ENCODE measurements at regions of chr10 and their contacts with region 1.

Region 1: DNA sequence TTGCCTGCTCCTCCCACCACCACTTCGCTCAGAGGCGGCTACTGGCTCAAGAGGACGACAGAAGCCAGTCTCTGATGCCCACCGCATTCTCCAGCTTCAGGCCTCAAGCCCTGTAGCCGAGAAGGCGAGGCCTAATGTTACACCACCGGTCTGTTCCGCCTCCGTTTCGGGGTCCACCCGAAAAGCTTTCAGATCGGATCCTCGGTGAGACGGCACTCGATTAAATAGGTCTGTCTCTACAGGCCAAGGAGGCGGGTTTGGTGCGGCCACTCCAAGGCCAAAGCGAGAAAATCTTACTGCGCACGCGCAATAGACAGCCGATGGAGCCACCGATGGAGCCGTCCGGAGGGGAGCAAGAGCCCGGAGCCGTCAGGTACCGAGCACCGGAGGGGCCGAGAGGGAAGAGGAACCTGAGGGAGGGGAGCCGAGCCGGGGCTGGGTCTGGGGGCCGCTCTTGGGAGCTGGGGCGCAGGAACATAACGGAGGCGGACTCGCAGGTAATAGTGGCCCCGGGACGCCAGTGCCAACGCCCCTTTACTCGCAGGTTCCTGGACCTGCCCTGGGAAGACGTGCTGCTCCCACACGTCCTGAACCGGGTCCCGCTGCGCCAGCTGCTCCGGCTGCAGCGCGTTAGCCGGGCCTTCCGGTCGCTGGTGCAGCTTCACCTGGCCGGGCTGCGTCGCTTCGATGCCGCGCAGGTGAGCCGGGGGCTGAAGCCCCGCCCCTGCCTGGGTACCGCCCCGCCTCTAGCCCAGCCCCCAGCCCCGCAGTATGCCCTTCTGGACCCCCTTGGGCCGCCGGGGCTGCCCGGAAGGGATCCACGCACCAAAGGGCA is at the start of gene FBXL15:
- DNase-seq: peak; percentile 90 to 98
- H3K4me3 ChIP-seq: peak within 1 kb of the TSS; percentile 74 to 92 (median 80)
- H3K27ac ChIP-seq: peak within 1 kb of the TSS; percentile 81; the same call in 1 of the 2 replicates
- H3K4me1 ChIP-seq: peaks cover 0 to 24% (median 10%) of the 10 kb centered on the region in 4 experiments; a peak in 5 of 7 replicates
- H3K27me3 ChIP-seq: no peaks in the 10 kb centered on the region
- CTCF ChIP-seq: no peak; a peak in 1 of 4 replicates
- EP300 ChIP-seq: peak in 1 of 2 experiments; percentile 50; a peak in 1 of 3 replicates
- POLR2A ChIP-seq: peak in 1 of 2 experiments; percentile 57; a peak in 1 of 3 replicates
- RAD21 ChIP-seq: no peak
- total RNA-seq, gene FBXL15: 11.3 and 15.4 TPM in 2 replicates

Region 2: GRCh38 chr10:102159051-102159597 is 261.9 kb before region 1 on chr10:
- CTCF ChIA-PET with region 1: no interaction called
- POLR2A ChIA-PET with region 1: no interaction called
- DNase-seq: no peak
- H3K4me3 ChIP-seq: no peak overlapping the region
- H3K27ac ChIP-seq: no peak overlapping the region
- H3K4me1 ChIP-seq: peaks cover 0 to 4% (median 0%) of the 10 kb centered on the region in 4 experiments; a peak in 1 of 7 replicates
- H3K27me3 ChIP-seq: no peaks in the 10 kb centered on the region
- CTCF ChIP-seq: no peak
- EP300 ChIP-seq: no peak
- POLR2A ChIP-seq: no peak
- RAD21 ChIP-seq: no peak

Region 3: GRCh38 chr10:102384053-102384452 is 37.0 kb before region 1 on chr10:
- CTCF ChIA-PET with region 1: interaction called, 65 read pairs
- POLR2A ChIA-PET with region 1: interaction called, 3 read pairs
- DNase-seq: peak in 1 of 2 experiments; percentile 63
- H3K4me3 ChIP-seq: no peak overlapping the region
- H3K27ac ChIP-seq: no peak overlapping the region
- H3K4me1 ChIP-seq: 0 out of 7 replicates have a peak, but pooled peaks cover 0 to 2% (median 0%) of the 10 kb centered on the region in 4 experiments
- H3K27me3 ChIP-seq: no peaks in the 10 kb centered on the region
- CTCF ChIP-seq: peak; percentile 83 to 87 (median 84)
- EP300 ChIP-seq: no peak
- POLR2A ChIP-seq: no peak
- RAD21 ChIP-seq: peak; percentile 66 to 72

Region 4: DNA sequence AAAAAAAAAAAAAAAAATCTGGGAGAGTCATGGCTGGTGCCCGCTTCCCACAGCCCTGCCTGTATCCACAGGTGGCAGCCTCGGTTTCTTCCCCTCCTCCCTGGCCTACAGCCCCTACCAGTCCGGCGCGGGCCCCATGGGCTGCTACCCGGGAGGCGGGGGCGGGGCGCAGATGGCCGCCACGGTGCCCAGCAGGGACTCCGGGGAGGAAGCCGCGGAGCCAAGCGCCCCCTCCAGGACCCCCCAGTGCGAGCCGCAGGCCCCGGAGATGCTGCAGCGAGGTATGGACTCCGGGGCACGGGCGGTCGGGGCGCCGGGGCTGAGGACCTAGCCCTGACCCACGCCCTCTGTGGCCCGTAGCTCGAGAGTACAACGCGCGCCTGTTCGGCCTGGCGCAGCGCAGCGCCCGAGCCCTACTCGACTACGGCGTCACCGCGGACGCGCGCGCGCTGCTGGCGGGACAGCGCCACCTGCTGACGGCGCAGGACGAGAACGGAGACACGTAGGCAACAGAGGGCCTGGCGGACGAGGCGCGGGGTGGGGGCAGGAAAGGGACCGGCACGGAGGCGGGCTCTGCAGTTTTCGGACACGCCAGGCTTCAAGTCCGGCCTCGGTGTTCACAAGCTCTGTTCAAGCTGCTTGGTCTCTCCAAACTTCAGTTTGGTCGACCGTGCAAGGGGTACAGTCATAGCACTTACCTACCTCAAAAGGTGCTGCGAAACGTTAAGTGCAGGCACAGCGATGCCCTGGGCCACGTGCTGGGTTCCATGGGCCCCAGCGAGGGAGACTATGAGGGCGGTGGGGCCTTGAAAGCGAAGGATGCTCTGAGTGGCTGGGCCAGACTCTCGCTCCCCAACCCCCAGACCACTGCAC is 21.6 kb before region 1 on chr10:
- CTCF ChIA-PET with region 1: interaction called, 205 read pairs
- POLR2A ChIA-PET with region 1: interaction called, 38 read pairs
- DNase-seq: peak; percentile 70 to 96
- H3K4me3 ChIP-seq: peak overlapping the region; percentile 33 to 70 (median 60)
- H3K27ac ChIP-seq: no peak overlapping the region
- H3K4me1 ChIP-seq: peaks cover 0 to 22% (median 13%) of the 10 kb centered on the region in 4 experiments; a peak in 6 of 7 replicates
- H3K27me3 ChIP-seq: peaks cover 0 to 14% (median 10%) of the 10 kb centered on the region in 4 experiments; a peak in 6 of 7 replicates
- CTCF ChIP-seq: peak in 2 of 3 experiments; percentile 96; a peak in 3 of 4 replicates
- EP300 ChIP-seq: peak in 1 of 2 experiments; percentile 35; a peak in 1 of 3 replicates
- POLR2A ChIP-seq: peak in 1 of 2 experiments; percentile 73; a peak in 2 of 3 replicates
- RAD21 ChIP-seq: peak; percentile 63 to 75

Region 5: DNA sequence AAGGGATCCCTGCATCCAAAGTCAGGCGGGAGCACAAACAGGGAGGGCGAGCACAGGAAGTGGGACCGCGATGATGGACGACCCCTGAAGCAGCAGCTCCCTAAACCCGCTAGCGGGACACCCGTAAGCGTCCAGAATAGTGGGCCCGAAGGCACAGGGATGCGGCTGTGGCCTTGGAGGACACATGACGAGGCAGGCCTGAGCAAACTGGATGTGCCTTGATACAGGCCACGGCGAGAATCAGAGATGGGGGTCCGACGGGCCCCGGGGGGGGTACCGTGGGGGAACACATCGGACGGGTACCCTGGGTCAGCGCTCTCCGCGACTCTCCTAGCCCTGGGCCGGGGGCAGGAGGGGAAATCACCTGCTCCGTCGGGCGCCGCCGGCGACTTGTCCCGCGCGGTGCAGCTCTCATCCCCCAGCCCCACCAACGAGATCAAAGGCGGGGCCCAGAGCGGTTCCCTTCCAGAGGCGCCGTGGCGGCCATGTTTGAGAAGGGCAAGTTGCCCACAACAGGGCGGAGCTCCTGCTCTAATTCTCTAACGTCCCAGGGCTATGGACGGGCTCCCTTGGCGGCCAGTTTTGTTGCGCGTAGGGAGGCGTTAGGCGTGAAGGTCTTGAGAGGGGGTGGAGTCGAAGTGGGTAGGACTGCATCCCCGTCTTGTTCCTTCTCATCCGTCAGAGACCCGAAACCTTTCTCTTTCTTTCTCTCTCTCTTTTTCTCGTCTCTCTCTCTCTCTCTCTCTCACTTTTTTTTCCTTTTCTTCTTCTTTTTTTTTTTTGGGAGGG is 11.3 kb after region 1 on chr10 and contains the start of gene CUEDC2:
- CTCF ChIA-PET with region 1: interaction called, 28 read pairs
- POLR2A ChIA-PET with region 1: interaction called, 56 read pairs
- DNase-seq: peak; percentile 90 to 100
- H3K4me3 ChIP-seq: peak within 1 kb of the TSS; percentile 66 to 92 (median 84)
- H3K27ac ChIP-seq: peak within 1 kb of the TSS; percentile 72; the same call in 1 of the 2 replicates
- H3K4me1 ChIP-seq: peaks cover 0 to 18% (median 13%) of the 10 kb centered on the region in 4 experiments; a peak in 6 of 7 replicates
- H3K27me3 ChIP-seq: peaks cover 13 to 37% (median 34%) of the 10 kb centered on the region in 4 experiments
- CTCF ChIP-seq: no peak
- EP300 ChIP-seq: no peak
- POLR2A ChIP-seq: peak; percentile 34 to 84
- RAD21 ChIP-seq: peak in 1 of 2 experiments; percentile 5; a peak in 1 of 4 replicates
- total RNA-seq, gene CUEDC2: 41.7 and 43.6 TPM in 2 replicates

Region 6: GRCh38 chr10:102461187-102462054 is 40.4 kb after region 1 on chr10:
- CTCF ChIA-PET with region 1: interaction called, 14 read pairs
- POLR2A ChIA-PET with region 1: interaction called, 41 read pairs
- DNase-seq: peak; percentile 75 to 98
- H3K4me3 ChIP-seq: peak overlapping the region; percentile 50 to 75 (median 67)
- H3K27ac ChIP-seq: peak overlapping the region; percentile 51; the same call in 1 of the 2 replicates
- H3K4me1 ChIP-seq: peaks cover 8 to 24% (median 14%) of the 10 kb centered on the region in 4 experiments
- H3K27me3 ChIP-seq: peaks cover 0 to 5% (median 0%) of the 10 kb centered on the region in 4 experiments; a peak in 1 of 7 replicates
- CTCF ChIP-seq: no peak
- EP300 ChIP-seq: peak in 1 of 2 experiments; percentile 16; a peak in 1 of 3 replicates
- POLR2A ChIP-seq: peak in 1 of 2 experiments; percentile 71; a peak in 2 of 3 replicates
- RAD21 ChIP-seq: no peak

Measured in H1 (cell line).